CD4-positive, alpha-beta memory T cell (primary cell): ENCODE measurements at regions of chr7 and their contacts with region 1.

Region 1: GRCh38 chr7:138752568-138753518 is 45.0 kb upstream of the TMEM213 start:
- DNase-seq: peak; percentile 93 to 99 (median 98)
- H3K4me3 ChIP-seq: peak overlapping the region in 1 of 2 donors; percentile 37
- H3K4me3 Mint-ChIP-seq: peak overlapping the region; percentile 28 to 78 (median 60)
- H3K27ac ChIP-seq: peak overlapping the region; percentile 60
- H3K27ac Mint-ChIP-seq: peak overlapping the region; percentile 91 to 98 (median 96)
- H3K4me1 ChIP-seq: peaks cover 36% of the 10 kb centered on the region
- H3K4me1 Mint-ChIP-seq: peaks cover 37 to 79% (median 49%) of the 10 kb centered on the region in 4 donors
- H3K27me3 ChIP-seq: no peaks in the 10 kb centered on the region
- H3K27me3 Mint-ChIP-seq: no peaks in the 10 kb centered on the region

Region 2: GRCh38 chr7:138459413-138460175 is 293.2 kb before region 1 on chr7:
- CTCF ChIA-PET with region 1: no interaction called
- POLR2A ChIA-PET with region 1: interaction called, 6 read pairs
- intact Hi-C with region 1: loop called (anchors 1 kb)
- DNase-seq: peak; percentile 98 to 99 (median 98)
- H3K4me3 ChIP-seq: peak overlapping the region in 1 of 2 donors; percentile 49
- H3K4me3 Mint-ChIP-seq: peak overlapping the region; percentile 73 to 94 (median 84)
- H3K27ac ChIP-seq: peak overlapping the region; percentile 2
- H3K27ac Mint-ChIP-seq: peak overlapping the region; percentile 58 to 95 (median 85)
- H3K4me1 ChIP-seq: peaks cover 15% of the 10 kb centered on the region
- H3K4me1 Mint-ChIP-seq: peaks cover 15 to 30% (median 23%) of the 10 kb centered on the region in 4 donors
- H3K27me3 ChIP-seq: no peaks in the 10 kb centered on the region
- H3K27me3 Mint-ChIP-seq: peaks cover 0 to 3% of the 10 kb centered on the region in 2 donors

Region 3: DNA sequence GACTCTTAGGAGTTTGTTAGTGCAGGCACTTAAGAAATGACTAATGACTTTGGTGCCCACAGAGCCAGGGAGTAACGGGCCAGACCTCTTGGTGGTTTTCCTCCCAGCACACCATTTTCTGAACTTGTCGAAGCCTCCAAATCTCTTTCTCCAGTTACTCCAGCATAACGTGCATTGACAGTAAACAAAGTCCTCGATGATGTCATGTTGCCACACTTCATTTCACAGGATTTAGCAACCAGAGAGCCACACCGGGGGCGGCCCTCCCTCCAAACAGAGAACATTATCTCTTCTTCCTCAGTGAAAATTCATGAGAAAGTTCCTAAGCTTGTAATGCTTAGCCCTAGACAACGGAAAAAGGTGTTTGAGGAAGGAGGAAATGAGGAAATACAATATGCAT is 47.7 kb before region 1 on chr7:
- CTCF ChIA-PET with region 1: no interaction called
- POLR2A ChIA-PET with region 1: no interaction called
- intact Hi-C with region 1: no loop called
- DNase-seq: no peak
- H3K4me3 ChIP-seq: no peak overlapping the region
- H3K4me3 Mint-ChIP-seq: no peak overlapping the region
- H3K27ac ChIP-seq: no peak overlapping the region
- H3K27ac Mint-ChIP-seq: peak overlapping the region in 1 of 7 donors; percentile 17
- H3K4me1 ChIP-seq: no peaks in the 10 kb centered on the region
- H3K4me1 Mint-ChIP-seq: no peaks in the 10 kb centered on the region
- H3K27me3 ChIP-seq: no peaks in the 10 kb centered on the region
- H3K27me3 Mint-ChIP-seq: peaks cover 0 to 4% of the 10 kb centered on the region in 2 donors

Region 4: GRCh38 chr7:138865843-138866242 is 113.0 kb after region 1 on chr7:
- CTCF ChIA-PET with region 1: interaction called, 3 read pairs
- POLR2A ChIA-PET with region 1: interaction called, 3 read pairs
- intact Hi-C with region 1: loop called (anchors 1 kb)
- DNase-seq: peak; percentile 36 to 56 (median 42)
- H3K4me3 ChIP-seq: no peak overlapping the region
- H3K4me3 Mint-ChIP-seq: no peak overlapping the region
- H3K27ac ChIP-seq: no peak overlapping the region
- H3K27ac Mint-ChIP-seq: peak overlapping the region in 3 of 7 donors; percentile 40 to 81 (median 55)
- H3K4me1 ChIP-seq: no peaks in the 10 kb centered on the region
- H3K4me1 Mint-ChIP-seq: peaks cover 0 to 5% (median 3%) of the 10 kb centered on the region in 4 donors
- H3K27me3 ChIP-seq: no peaks in the 10 kb centered on the region
- H3K27me3 Mint-ChIP-seq: peaks cover 0 to 4% of the 10 kb centered on the region in 2 donors

Region 5: GRCh38 chr7:138903186-138903820 is 150.5 kb after region 1 on chr7:
- CTCF ChIA-PET with region 1: no interaction called
- POLR2A ChIA-PET with region 1: interaction called, 12 read pairs
- intact Hi-C with region 1: loop called (anchors 1 kb)
- DNase-seq: peak; percentile 86 to 91 (median 89)
- H3K4me3 ChIP-seq: no peak overlapping the region
- H3K4me3 Mint-ChIP-seq: peak overlapping the region; percentile 77 to 94 (median 85)
- H3K27ac ChIP-seq: no peak overlapping the region
- H3K27ac Mint-ChIP-seq: peak overlapping the region; percentile 57 to 99 (median 91)
- H3K4me1 ChIP-seq: peaks cover 38% of the 10 kb centered on the region
- H3K4me1 Mint-ChIP-seq: peaks cover 24 to 52% (median 31%) of the 10 kb centered on the region in 4 donors
- H3K27me3 ChIP-seq: no peaks in the 10 kb centered on the region
- H3K27me3 Mint-ChIP-seq: peaks cover 6 to 11% of the 10 kb centered on the region in 2 donors

Region 6: DNA sequence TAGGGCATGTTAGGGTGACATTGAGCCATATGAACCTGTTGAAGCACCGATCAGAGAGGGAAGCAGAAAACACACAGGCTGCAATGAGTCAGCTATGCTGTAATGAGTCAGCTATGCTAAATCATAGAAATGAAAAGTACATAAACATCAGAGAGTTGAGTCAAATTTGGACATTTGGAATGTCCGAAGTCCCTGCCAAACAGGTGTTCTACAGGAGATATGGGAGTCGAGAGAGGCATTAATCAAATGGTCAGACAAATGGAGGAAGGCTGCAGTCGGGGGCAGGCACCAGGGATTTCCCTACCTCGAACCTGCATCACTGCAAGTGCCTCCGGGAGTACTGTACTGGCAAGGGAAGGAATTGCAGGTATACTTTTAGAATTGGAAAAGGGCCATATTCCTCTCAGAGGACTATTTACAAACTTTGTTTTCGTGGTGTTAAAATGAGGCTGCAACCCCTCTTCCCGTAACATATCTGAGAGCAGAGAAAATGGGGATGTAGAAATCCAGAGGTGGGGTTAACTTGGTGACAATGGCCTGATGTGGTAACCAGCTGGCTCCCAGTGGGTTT is 365.5 kb after region 1 on chr7:
- CTCF ChIA-PET with region 1: no interaction called
- POLR2A ChIA-PET with region 1: no interaction called
- intact Hi-C with region 1: loop called (anchors 10 kb)
- DNase-seq: no peak
- H3K4me3 ChIP-seq: peak overlapping the region in 1 of 2 donors; percentile 8
- H3K4me3 Mint-ChIP-seq: peak overlapping the region; percentile 48 to 86 (median 78)
- H3K27ac ChIP-seq: peak overlapping the region; percentile 4
- H3K27ac Mint-ChIP-seq: peak overlapping the region; percentile 59 to 93 (median 89)
- H3K4me1 ChIP-seq: peaks cover 28% of the 10 kb centered on the region
- H3K4me1 Mint-ChIP-seq: peaks cover 25 to 52% (median 32%) of the 10 kb centered on the region in 4 donors
- H3K27me3 ChIP-seq: no peaks in the 10 kb centered on the region
- H3K27me3 Mint-ChIP-seq: peaks cover 0 to 3% of the 10 kb centered on the region in 2 donors

Region 7: GRCh38 chr7:139340037-139340807 is 587.4 kb after region 1 on chr7:
- CTCF ChIA-PET with region 1: no interaction called
- POLR2A ChIA-PET with region 1: no interaction called
- intact Hi-C with region 1: loop called (anchors 2 kb)
- DNase-seq: peak; percentile 97 to 100 (median 98)
- H3K4me3 ChIP-seq: peak overlapping the region; percentile 95 to 96
- H3K4me3 Mint-ChIP-seq: peak overlapping the region; percentile 95 to 99 (median 98)
- H3K27ac ChIP-seq: peak overlapping the region; percentile 100
- H3K27ac Mint-ChIP-seq: peak overlapping the region; percentile 100
- H3K4me1 ChIP-seq: peaks cover 20% of the 10 kb centered on the region
- H3K4me1 Mint-ChIP-seq: peaks cover 17 to 45% (median 27%) of the 10 kb centered on the region in 4 donors
- H3K27me3 ChIP-seq: no peaks in the 10 kb centered on the region
- H3K27me3 Mint-ChIP-seq: peaks cover 3 to 6% of the 10 kb centered on the region in 2 donors